PC-9 (cell line): ENCODE measurements at regions of chr3 and their contacts with region 1.

Region 1: DNA sequence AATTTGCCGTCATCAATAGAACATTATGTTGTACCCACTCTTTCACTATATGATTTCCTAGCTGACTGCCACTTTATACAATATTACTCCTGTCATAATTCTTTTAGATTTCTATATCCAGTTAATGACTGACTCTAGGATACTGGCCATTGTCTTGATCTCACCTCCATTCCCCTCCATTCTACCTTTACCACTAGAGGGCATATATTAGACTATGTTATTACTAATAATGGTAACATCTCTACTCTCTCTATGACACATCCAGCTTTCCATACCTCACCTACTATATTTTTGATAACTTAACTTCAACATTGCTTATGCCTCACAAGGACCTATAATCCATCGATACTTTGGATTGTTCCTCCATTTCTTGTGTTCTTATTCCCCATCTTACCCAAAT is 31.4 kb upstream of the POU1F1 start:
- DNase-seq: no peak
- H3K4me3 ChIP-seq: no peak overlapping the region
- H3K27ac ChIP-seq: no peak overlapping the region
- H3K4me1 ChIP-seq: peaks cover 8% of the 10 kb centered on the region; the same call in 1 of the 2 replicates
- H3K27me3 ChIP-seq: no peaks in the 10 kb centered on the region
- CTCF ChIP-seq: 0 out of 2 replicates have a peak, but pooled peaks have one; percentile 34

Region 2: DNA sequence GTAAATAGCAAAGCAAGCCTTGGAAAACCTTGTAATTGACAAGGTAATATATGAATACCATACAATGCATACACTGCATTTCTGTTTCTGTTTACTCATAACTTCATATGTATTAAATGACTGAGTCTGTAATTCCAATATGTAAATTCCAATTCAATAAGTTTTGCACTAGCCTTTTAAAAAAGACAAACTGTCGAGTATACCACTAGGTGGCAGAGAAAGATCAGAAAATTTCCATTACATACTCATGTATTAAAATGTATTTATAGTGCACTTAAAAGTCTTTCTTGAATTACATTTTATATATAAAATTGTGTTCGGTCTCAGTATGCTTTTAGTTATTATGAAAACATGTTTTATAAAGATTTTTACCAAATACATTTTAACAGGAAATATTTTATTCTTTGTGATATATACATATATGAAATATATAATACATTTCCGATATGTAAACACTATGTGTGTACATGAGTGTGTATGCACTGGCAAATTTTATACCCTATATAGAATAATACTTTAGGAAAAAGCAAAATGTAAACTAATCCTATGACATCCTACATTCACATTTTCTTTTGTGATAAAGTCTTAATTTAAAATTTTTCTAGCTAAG is 533.6 kb before region 1 on chr3:
- CTCF ChIA-PET with region 1: interaction called, 13 read pairs
- POLR2A ChIA-PET with region 1: no interaction called
- intact Hi-C with region 1: no loop called
- DNase-seq: peak in 1 of 2 experiments; percentile 44
- H3K4me3 ChIP-seq: no peak overlapping the region
- H3K27ac ChIP-seq: no peak overlapping the region
- H3K4me1 ChIP-seq: no peaks in the 10 kb centered on the region
- H3K27me3 ChIP-seq: no peaks in the 10 kb centered on the region
- CTCF ChIP-seq: peak; percentile 81

Region 3: GRCh38 chr3:87287011-87287410 is 20.8 kb before region 1 on chr3:
- CTCF ChIA-PET with region 1: no interaction called
- POLR2A ChIA-PET with region 1: no interaction called
- intact Hi-C with region 1: no loop called
- DNase-seq: no peak
- H3K4me3 ChIP-seq: no peak overlapping the region
- H3K27ac ChIP-seq: no peak overlapping the region
- H3K4me1 ChIP-seq: no peaks in the 10 kb centered on the region
- H3K27me3 ChIP-seq: no peaks in the 10 kb centered on the region
- CTCF ChIP-seq: no peak

Region 4: GRCh38 chr3:87333393-87333892 is 25.6 kb after region 1 on chr3:
- CTCF ChIA-PET with region 1: interaction called, 3 read pairs
- POLR2A ChIA-PET with region 1: no interaction called
- intact Hi-C with region 1: loop called (anchors 2 kb)
- DNase-seq: peak; percentile 54 to 97
- H3K4me3 ChIP-seq: peak overlapping the region; percentile 33; the same call in 1 of the 2 replicates
- H3K27ac ChIP-seq: peak overlapping the region; percentile 88
- H3K4me1 ChIP-seq: peaks cover 32% of the 10 kb centered on the region
- H3K27me3 ChIP-seq: no peaks in the 10 kb centered on the region
- CTCF ChIP-seq: no peak

Region 5: GRCh38 chr3:87350364-87351199 is 42.8 kb after region 1 on chr3:
- CTCF ChIA-PET with region 1: no interaction called
- POLR2A ChIA-PET with region 1: no interaction called
- intact Hi-C with region 1: loop called (anchors 2 kb)
- DNase-seq: peak in 1 of 2 experiments; percentile 48
- H3K4me3 ChIP-seq: no peak overlapping the region
- H3K27ac ChIP-seq: no peak overlapping the region
- H3K4me1 ChIP-seq: no peaks in the 10 kb centered on the region
- H3K27me3 ChIP-seq: no peaks in the 10 kb centered on the region
- CTCF ChIP-seq: peak; percentile 88

Region 6: GRCh38 chr3:87488765-87489164 is 181.0 kb after region 1 on chr3:
- CTCF ChIA-PET with region 1: no interaction called
- POLR2A ChIA-PET with region 1: no interaction called
- intact Hi-C with region 1: no loop called
- DNase-seq: no peak
- H3K4me3 ChIP-seq: no peak overlapping the region
- H3K27ac ChIP-seq: no peak overlapping the region
- H3K4me1 ChIP-seq: no peaks in the 10 kb centered on the region
- H3K27me3 ChIP-seq: no peaks in the 10 kb centered on the region
- CTCF ChIP-seq: no peak